ENCODE measurements at regions of chr17 and their contacts with region 1.

Region 1: GRCh38 chr17:59521204-59522126 is 43.9 kb upstream of the DHX40 start:
- DNase-seq: peak; percentile 72
- H3K4me3 ChIP-seq: no peak overlapping the region
- H3K27ac ChIP-seq: no peak overlapping the region
- H3K4me1 ChIP-seq: no peaks in the 10 kb centered on the region
- H3K27me3 ChIP-seq: peaks cover 2 to 7% of the 10 kb centered on the region in 2 experiments
- CTCF ChIP-seq: peak; percentile 75 to 79
- POLR2A ChIP-seq: no peak

Region 2: GRCh38 chr17:59311130-59311920 is 210.1 kb before region 1 on chr17:
- CTCF ChIA-PET with region 1: interaction called, 42 read pairs
- POLR2A ChIA-PET with region 1: no interaction called
- dilution Hi-C with region 1: no loop called
- intact Hi-C with region 1: loop called (anchors 1 kb)
- DNase-seq: peak; percentile 79
- H3K4me3 ChIP-seq: no peak overlapping the region
- H3K27ac ChIP-seq: no peak overlapping the region
- H3K4me1 ChIP-seq: no peaks in the 10 kb centered on the region
- H3K27me3 ChIP-seq: no peaks in the 10 kb centered on the region
- CTCF ChIP-seq: peak; percentile 64 to 67
- POLR2A ChIP-seq: no peak

Region 3: DNA sequence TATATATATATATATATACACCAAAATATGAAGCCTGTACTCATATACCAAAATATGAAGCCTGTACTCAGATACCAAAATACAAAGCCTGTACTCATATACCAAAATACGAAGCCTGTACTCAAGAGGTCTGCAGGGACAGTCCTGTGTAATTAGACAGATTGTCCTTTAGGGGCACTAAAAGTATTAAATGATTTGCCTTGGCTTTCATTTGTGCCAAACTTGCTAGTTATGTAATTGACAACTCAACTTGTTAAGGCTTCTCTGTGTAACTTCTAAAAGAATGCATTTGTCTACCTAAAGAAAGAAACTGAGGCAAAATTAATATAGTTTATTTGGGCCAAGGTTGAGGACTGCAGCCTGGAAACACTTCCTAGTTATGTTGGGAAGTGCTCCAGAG is 13.1 kb after region 1 on chr17:
- CTCF ChIA-PET with region 1: interaction called, 29 read pairs
- POLR2A ChIA-PET with region 1: no interaction called
- dilution Hi-C with region 1: no loop called
- intact Hi-C with region 1: no loop called
- DNase-seq: no peak
- H3K4me3 ChIP-seq: no peak overlapping the region
- H3K27ac ChIP-seq: no peak overlapping the region
- H3K4me1 ChIP-seq: no peaks in the 10 kb centered on the region
- H3K27me3 ChIP-seq: peaks cover 5 to 6% of the 10 kb centered on the region in 2 experiments
- CTCF ChIP-seq: no peak
- POLR2A ChIP-seq: no peak

Region 4: DNA sequence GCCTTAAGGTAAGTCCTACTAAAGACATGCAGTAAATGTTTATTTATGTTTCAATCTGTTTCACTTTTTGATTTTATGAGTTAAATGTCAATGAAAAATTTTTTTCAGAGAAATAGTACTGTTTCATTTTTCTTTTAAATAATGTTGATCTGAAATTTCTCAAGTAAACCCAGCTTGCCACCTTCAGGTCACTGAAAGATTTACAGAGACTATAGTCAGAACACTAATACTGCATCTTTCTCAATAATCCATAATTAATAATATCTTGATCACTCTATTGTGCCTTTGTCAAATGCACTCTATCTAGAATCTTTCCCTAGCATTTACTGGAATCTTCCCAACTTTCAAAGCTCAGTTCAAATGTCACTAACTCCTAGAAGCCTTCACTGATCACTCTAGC is 37.5 kb after region 1 on chr17:
- CTCF ChIA-PET with region 1: interaction called, 25 read pairs
- POLR2A ChIA-PET with region 1: no interaction called
- dilution Hi-C with region 1: no loop called
- intact Hi-C with region 1: loop called (anchors 2 kb)
- DNase-seq: peak; percentile 28
- H3K4me3 ChIP-seq: no peak overlapping the region
- H3K27ac ChIP-seq: no peak overlapping the region
- H3K4me1 ChIP-seq: no peaks in the 10 kb centered on the region
- H3K27me3 ChIP-seq: peaks cover 0 to 2% of the 10 kb centered on the region in 2 experiments
- CTCF ChIP-seq: no peak
- POLR2A ChIP-seq: no peak

Region 5: DNA sequence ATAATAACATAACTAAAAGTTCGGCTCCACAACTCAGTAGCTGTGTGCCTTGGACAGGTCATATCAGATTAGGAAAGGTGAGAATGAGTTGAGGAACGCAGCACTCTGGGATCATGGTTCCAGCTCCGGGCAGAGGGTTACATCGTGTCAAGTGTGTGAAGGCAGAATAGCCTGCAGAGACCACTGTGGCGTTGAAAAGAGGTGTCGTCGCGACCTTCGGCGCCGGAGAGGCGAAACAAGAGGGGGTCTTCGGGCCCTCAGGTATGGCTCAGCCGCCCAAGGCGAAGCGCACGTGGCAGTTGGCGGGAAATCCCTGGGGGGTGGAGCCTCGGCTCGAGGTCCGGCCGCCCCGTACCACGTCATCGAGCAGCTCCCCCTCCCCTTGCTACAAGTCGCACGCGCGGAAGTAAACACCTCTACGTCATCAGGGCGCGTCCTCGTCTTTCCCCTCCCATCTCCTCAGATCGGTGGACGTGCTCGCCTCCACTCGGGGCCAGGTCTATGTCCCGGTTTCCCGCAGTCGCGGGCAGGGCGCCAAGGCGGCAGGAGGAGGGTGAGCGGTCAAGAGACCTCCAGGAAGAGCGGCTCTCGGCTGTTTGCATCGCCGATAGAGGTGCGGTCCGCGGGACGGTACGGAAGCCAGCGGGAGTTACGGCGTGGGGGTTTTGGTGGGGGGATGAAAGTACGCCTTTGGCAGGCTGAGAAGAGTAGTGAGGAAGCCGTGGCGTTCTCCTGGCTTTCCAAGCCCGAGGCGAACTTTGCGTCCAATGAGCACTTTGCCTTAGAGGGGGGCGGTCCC is 43.9 kb after region 1 on chr17 and contains the start of gene DHX40:
- CTCF ChIA-PET with region 1: interaction called, 25 read pairs
- POLR2A ChIA-PET with region 1: no interaction called
- dilution Hi-C with region 1: no loop called
- intact Hi-C with region 1: no loop called
- DNase-seq: peak; percentile 92
- H3K4me3 ChIP-seq: peak within 1 kb of the TSS; percentile 51 to 95 (median 77)
- H3K27ac ChIP-seq: peak within 1 kb of the TSS; percentile 53
- H3K4me1 ChIP-seq: peaks cover 7% of the 10 kb centered on the region
- H3K27me3 ChIP-seq: no peaks in the 10 kb centered on the region
- CTCF ChIP-seq: no peak
- POLR2A ChIP-seq: peak; percentile 20
- total RNA-seq, gene DHX40: 28.6 and 29.7 TPM in 2 replicates

Region 6: GRCh38 chr17:59707114-59707970 is 185.9 kb after region 1 on chr17 and contains the starts of genes PTRH2 and VMP1:
- CTCF ChIA-PET with region 1: no interaction called
- POLR2A ChIA-PET with region 1: no interaction called
- dilution Hi-C with region 1: no loop called
- intact Hi-C with region 1: loop called (anchors 10 kb)
- DNase-seq: peak; percentile 100
- H3K4me3 ChIP-seq: peak within 1 kb of the TSS; percentile 59 to 90 (median 89)
- H3K27ac ChIP-seq: peak within 1 kb of the TSS; percentile 97
- H3K4me1 ChIP-seq: peaks cover 26% of the 10 kb centered on the region
- H3K27me3 ChIP-seq: no peaks in the 10 kb centered on the region
- CTCF ChIP-seq: no peak
- POLR2A ChIP-seq: peak; percentile 94
- total RNA-seq, gene PTRH2: 40.1 and 41.2 TPM in 2 replicates
- total RNA-seq, gene VMP1: 270 and 321 TPM in 2 replicates

Measured in endothelial cell of umbilical vein (primary cell).